Tibial artery (tissue), 4 donors: ENCODE measurements at regions of chr12 and their contacts with region 1.

Region 1: DNA sequence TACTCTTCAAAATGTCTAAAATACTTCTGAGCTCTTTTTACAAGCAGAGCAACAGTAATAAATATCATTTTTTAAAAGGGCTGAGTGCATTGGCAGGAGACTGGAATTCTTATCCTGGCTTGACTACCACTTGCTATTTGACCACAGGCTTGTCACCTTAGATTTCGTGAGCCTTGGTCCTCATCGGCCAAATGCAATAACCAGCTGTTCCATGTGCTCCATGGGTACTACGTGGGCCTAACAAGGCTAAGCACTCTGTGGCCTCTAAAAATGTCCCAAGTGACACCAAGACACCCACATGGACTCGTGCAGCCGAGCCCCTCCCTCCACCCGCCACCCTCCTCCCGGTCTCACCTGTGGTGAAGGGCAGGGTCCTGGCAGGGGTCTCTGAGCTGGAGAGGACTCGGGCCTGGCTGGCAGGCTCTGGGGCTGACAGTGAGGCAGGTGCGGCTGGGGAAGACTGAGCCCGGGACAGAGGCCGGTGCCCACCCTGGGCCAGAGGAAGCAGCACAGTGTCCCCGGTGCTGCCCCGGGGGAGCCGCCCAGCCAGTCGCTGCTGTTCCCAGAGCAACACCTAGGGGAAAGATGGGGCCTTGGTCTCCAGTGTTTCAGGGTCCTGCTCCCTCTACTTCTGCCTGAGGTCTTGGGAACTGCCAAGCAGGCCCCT is 20.1 kb downstream of the SLC48A1 start:
- DNase-seq: no peak
- H3K4me3 ChIP-seq: no peak overlapping the region
- H3K27ac ChIP-seq: peak overlapping the region; percentile 5 to 44
- H3K4me1 ChIP-seq: peaks cover 0 to 6% (median 2%) of the 10 kb centered on the region in 4 donors
- H3K27me3 ChIP-seq: no peaks in the 10 kb centered on the region
- CTCF ChIP-seq: no peak

Region 2: DNA sequence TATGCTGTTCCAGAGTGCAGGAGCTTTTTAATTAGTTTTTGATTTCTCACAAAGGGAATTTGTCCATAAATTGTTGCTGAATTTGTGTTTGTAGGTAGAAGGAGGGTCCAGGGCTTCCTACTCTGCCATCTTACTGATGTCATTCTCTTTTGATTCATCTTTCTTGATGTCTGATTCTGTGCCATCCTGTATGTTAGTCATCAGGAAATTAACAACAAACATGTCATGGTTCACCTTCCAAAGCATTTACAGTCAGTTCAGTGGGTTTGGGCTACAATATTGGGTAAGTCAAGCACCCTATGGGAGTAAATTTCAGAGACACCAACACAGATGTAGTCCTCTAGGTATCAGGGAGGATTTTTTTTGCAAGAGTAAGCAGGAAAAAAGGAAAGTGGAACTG is 1285.4 kb before region 1 on chr12:
- intact Hi-C with region 1: no loop called
- DNase-seq: no peak
- H3K4me3 ChIP-seq: no peak overlapping the region
- H3K27ac ChIP-seq: no peak overlapping the region
- H3K4me1 ChIP-seq: no peaks in the 10 kb centered on the region
- H3K27me3 ChIP-seq: no peaks in the 10 kb centered on the region
- CTCF ChIP-seq: no peak

Region 3: GRCh38 chr12:47832263-47832933 is 39.2 kb after region 1 on chr12:
- intact Hi-C with region 1: loop called (anchors 5 kb)
- DNase-seq: no peak
- H3K4me3 ChIP-seq: no peak overlapping the region
- H3K27ac ChIP-seq: no peak overlapping the region
- H3K4me1 ChIP-seq: peaks cover 3 to 30% (median 25%) of the 10 kb centered on the region in 4 donors
- H3K27me3 ChIP-seq: no peaks in the 10 kb centered on the region
- CTCF ChIP-seq: no peak